Naive thymus-derived CD4-positive, alpha-beta T cell (primary cell): ENCODE measurements at regions of chr1 and their contacts with region 1.

Region 1: DNA sequence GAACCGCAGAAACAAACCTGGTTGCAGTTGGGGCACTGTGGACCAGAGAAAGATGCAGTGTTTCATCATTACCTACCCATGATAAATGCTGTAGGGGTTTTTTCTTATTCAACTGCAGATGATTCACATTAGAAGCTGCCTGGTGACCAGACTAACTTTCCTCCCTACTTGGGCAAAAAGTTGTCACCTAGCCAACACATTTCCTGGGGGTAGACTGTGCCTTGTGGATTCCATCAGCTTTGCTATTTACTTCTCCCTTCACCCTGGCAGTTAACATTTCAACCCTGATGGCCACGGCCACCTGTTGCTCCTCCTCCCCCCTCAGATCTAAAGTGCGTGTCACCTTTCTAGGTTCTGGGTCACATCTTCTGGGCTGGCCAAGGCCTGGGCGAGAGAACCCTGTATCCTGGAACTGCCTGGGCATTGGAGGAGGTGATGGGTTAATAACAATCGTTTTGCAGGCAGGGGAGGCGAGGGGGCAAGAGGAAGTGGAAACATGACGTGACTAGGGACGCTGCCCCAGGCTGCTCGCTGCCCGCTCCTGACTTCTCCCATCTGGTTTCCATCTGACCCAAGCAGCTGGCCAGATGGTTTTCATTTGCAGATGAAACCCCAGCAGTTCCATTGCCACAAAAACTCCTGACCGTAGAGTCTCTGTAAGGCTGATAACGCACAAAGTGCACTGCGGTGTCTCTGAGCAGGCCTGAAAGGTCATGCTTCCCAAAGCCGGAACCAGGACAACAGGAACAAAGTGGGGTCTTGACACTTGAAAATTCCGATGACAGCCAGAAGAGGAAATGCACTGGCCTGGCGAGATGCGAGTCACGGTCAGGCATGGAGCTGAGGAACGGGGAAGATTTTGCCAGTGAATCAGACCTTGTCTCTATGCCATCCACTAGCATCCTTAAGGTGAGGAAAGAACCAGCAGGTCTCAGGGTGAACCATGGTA is 36.6 kb downstream of the CAPZB start:
- DNase-seq: no peak
- ATAC-seq: peak; percentile 51
- H3K4me3 ChIP-seq: no peak overlapping the region
- H3K4me3 Mint-ChIP-seq: peak overlapping the region; percentile 25 to 77 (median 58)
- H3K27ac ChIP-seq: peak overlapping the region; percentile 25
- H3K27ac Mint-ChIP-seq: peak overlapping the region; percentile 45 to 92 (median 83)
- H3K4me1 ChIP-seq: peaks cover 55 to 83% of the 10 kb centered on the region in 2 donors
- H3K4me1 Mint-ChIP-seq: peaks cover 76 to 97% (median 89%) of the 10 kb centered on the region in 7 donors
- H3K27me3 ChIP-seq: no peaks in the 10 kb centered on the region
- H3K27me3 Mint-ChIP-seq: no peaks in the 10 kb centered on the region

Region 2: GRCh38 chr1:19462781-19463503 is 14.2 kb after region 1 on chr1:
- CTCF ChIA-PET with region 1: interaction called, 5 read pairs
- POLR2A ChIA-PET with region 1: interaction called, 9 read pairs
- intact Hi-C with region 1: loop called in 1 of 2 experiments (anchors 2 kb)
- DNase-seq: peak in 7 of 9 donors; percentile 69 to 88 (median 82)
- ATAC-seq: peak; percentile 90
- H3K4me3 ChIP-seq: peak overlapping the region; percentile 49
- H3K4me3 Mint-ChIP-seq: peak overlapping the region; percentile 66 to 87 (median 82)
- H3K27ac ChIP-seq: peak overlapping the region; percentile 84
- H3K27ac Mint-ChIP-seq: peak overlapping the region; percentile 86 to 98 (median 95)
- H3K4me1 ChIP-seq: peaks cover 88 to 92% of the 10 kb centered on the region in 2 donors
- H3K4me1 Mint-ChIP-seq: peaks cover 59 to 94% (median 84%) of the 10 kb centered on the region in 7 donors
- H3K27me3 ChIP-seq: no peaks in the 10 kb centered on the region
- H3K27me3 Mint-ChIP-seq: no peaks in the 10 kb centered on the region

Region 3: GRCh38 chr1:19477284-19478249 is 28.8 kb after region 1 on chr1:
- CTCF ChIA-PET with region 1: interaction called, 12 read pairs
- POLR2A ChIA-PET with region 1: interaction called, 7 read pairs
- intact Hi-C with region 1: loop called in 1 of 2 experiments (anchors 5 kb)
- DNase-seq: peak in 4 of 9 donors; percentile 29 to 45 (median 34)
- ATAC-seq: peak; percentile 68
- H3K4me3 ChIP-seq: peak overlapping the region; percentile 50
- H3K4me3 Mint-ChIP-seq: peak overlapping the region; percentile 81 to 98 (median 88)
- H3K27ac ChIP-seq: peak overlapping the region; percentile 75
- H3K27ac Mint-ChIP-seq: peak overlapping the region; percentile 86 to 97 (median 91)
- H3K4me1 ChIP-seq: peaks cover 88 to 92% of the 10 kb centered on the region in 2 donors
- H3K4me1 Mint-ChIP-seq: peaks cover 72 to 99% (median 95%) of the 10 kb centered on the region in 7 donors
- H3K27me3 ChIP-seq: no peaks in the 10 kb centered on the region
- H3K27me3 Mint-ChIP-seq: no peaks in the 10 kb centered on the region